GM12878 (cell line): ENCODE measurements at regions of chr17 and their contacts with region 1.

Region 1: GRCh38 chr17:78019367-78019975 is 61.0 kb downstream of the TNRC6C start:
- DNase-seq: peak; percentile 9
- ATAC-seq: peak; percentile 63
- H3K4me3 ChIP-seq: peak overlapping the region; percentile 25; the same call in 1 of the 2 replicates
- H3K27ac ChIP-seq: peak overlapping the region; percentile 60; the same call in 1 of the 2 replicates
- H3K4me1 ChIP-seq: peaks cover 14% of the 10 kb centered on the region
- H3K27me3 ChIP-seq: no peaks in the 10 kb centered on the region
- CTCF ChIP-seq: peak; percentile 31 to 67 (median 51); a peak in 5 of 6 replicates
- EP300 ChIP-seq: no peak
- POLR2A ChIP-seq: no peak
- RAD21 ChIP-seq: peak; percentile 62

Region 2: DNA sequence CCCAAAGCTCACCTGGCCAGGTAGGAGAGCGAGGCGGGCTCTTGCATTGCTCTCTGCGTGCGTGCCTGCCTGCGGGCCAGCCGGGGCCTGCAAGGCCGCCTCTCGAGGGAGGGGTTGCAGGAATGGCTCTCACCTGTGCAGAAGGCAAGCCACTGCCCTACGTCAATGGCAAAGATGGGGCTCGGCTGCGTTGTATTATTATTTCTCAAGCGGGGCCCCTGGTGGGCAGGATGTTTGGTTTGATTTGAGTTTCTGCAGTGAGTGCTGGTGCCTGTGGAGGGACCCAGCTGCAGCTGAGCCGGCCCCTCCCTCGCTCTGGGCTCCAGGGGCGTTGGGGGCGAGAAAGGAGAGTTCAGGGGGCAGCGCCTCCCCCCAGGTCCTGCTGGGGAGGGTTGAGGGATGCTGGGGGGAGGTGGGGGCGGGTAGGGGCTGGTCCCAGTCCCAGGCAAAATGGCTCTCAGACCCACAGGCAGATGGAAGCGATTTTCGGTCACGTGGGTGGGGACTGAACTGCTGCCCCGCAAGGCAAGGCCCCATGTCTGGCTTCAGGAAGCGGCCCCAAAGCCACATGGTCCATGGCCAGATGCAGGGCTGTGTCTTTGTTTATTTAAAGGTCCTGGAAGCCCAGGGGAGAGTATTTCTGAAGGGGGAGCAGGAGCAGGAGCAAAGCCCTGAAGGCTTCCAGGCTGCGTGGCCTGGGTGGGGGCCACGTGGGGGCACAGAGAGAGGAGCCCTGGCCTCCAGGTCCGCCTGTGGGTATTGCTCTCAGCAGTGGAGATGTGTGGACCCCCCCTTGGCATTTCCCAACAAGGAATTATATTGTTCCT is 539.9 kb before region 1 on chr17:
- CTCF ChIA-PET with region 1: no interaction called
- POLR2A ChIA-PET with region 1: no interaction called
- RAD21 ChIA-PET with region 1: no interaction called
- SMC1A ChIA-PET with region 1: no interaction called
- in situ Hi-C with region 1: no loop called
- intact Hi-C with region 1: no loop called
- DNase-seq: no peak
- ATAC-seq: no peak
- H3K4me3 ChIP-seq: no peak overlapping the region
- H3K27ac ChIP-seq: no peak overlapping the region
- H3K4me1 ChIP-seq: peaks cover 19% of the 10 kb centered on the region
- H3K27me3 ChIP-seq: no peaks in the 10 kb centered on the region
- CTCF ChIP-seq: no peak
- EP300 ChIP-seq: no peak
- POLR2A ChIP-seq: no peak; the same call in 1 of the 2 replicates
- RAD21 ChIP-seq: no peak

Region 3: GRCh38 chr17:77542551-77543490 is 476.6 kb before region 1 on chr17:
- CTCF ChIA-PET with region 1: interaction called, 58 read pairs
- POLR2A ChIA-PET with region 1: no interaction called
- RAD21 ChIA-PET with region 1: interaction called, 41 read pairs
- SMC1A ChIA-PET with region 1: interaction called, 26 read pairs
- in situ Hi-C with region 1: loop called (anchors 5 kb)
- intact Hi-C with region 1: loop called (anchors 1 kb)
- DNase-seq: peak; percentile 5
- ATAC-seq: peak; percentile 91
- H3K4me3 ChIP-seq: no peak overlapping the region
- H3K27ac ChIP-seq: no peak overlapping the region
- H3K4me1 ChIP-seq: no peaks in the 10 kb centered on the region
- H3K27me3 ChIP-seq: peaks cover 0 to 1% of the 10 kb centered on the region in 2 experiments; a peak in 2 of 4 replicates
- CTCF ChIP-seq: peak; percentile 84 to 88 (median 86)
- EP300 ChIP-seq: no peak
- POLR2A ChIP-seq: no peak
- RAD21 ChIP-seq: peak; percentile 84

Region 4: DNA sequence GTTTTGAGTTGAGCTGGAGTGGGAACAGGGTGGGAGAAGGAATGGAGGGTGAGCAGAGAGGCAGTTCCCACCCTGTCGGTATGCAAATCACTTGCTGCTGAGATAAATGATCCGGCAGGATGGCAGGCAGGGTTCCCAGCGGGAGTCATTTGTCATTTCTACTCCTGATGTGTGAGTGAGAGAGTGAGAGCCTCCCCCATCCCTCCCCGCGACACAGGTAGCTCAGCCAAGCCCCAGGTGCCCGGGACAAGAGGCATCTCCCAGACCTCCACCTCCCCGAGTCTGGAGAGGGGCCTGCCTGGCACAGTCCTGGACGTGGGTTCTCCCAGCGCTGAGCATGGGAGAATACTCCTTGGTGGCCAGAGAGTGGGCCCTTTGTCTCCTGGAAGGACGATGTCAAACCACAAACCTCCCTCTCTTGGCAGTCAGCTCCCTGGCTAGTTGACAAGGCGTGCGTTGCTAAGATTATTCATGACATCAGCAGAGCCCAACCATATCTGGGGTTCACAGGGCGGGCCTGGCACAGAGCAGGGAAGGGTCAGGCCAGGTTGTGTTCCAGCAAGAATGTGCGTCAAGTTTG is 94.6 kb before region 1 on chr17:
- CTCF ChIA-PET with region 1: no interaction called
- POLR2A ChIA-PET with region 1: no interaction called
- RAD21 ChIA-PET with region 1: no interaction called
- SMC1A ChIA-PET with region 1: no interaction called
- in situ Hi-C with region 1: no loop called
- intact Hi-C with region 1: no loop called
- DNase-seq: no peak
- ATAC-seq: no peak
- H3K4me3 ChIP-seq: no peak overlapping the region
- H3K27ac ChIP-seq: no peak overlapping the region
- H3K4me1 ChIP-seq: no peaks in the 10 kb centered on the region
- H3K27me3 ChIP-seq: peaks cover 0 to 3% of the 10 kb centered on the region in 2 experiments; a peak in 2 of 4 replicates
- CTCF ChIP-seq: no peak
- EP300 ChIP-seq: no peak
- POLR2A ChIP-seq: no peak
- RAD21 ChIP-seq: no peak

Region 5: GRCh38 chr17:77957857-77958715 is 61.4 kb before region 1 on chr17 and contains the start of gene TNRC6C:
- CTCF ChIA-PET with region 1: interaction called, 9 read pairs
- POLR2A ChIA-PET with region 1: interaction called, 10 read pairs
- RAD21 ChIA-PET with region 1: interaction called, 24 read pairs
- SMC1A ChIA-PET with region 1: interaction called, 6 read pairs
- in situ Hi-C with region 1: no loop called
- intact Hi-C with region 1: no loop called
- DNase-seq: peak; percentile 87
- ATAC-seq: peak; percentile 96
- H3K4me3 ChIP-seq: peak within 1 kb of the TSS; percentile 75
- H3K27ac ChIP-seq: no peak within 1 kb of the TSS
- H3K4me1 ChIP-seq: peaks cover 16% of the 10 kb centered on the region
- H3K27me3 ChIP-seq: peaks cover 0 to 3% of the 10 kb centered on the region in 2 experiments; a peak in 2 of 4 replicates
- CTCF ChIP-seq: peak in 2 of 3 experiments; percentile 20 to 38; a peak in 3 of 6 replicates
- EP300 ChIP-seq: no peak; a peak in 2 of 4 replicates
- POLR2A ChIP-seq: peak; percentile 100
- RAD21 ChIP-seq: no peak
- polyA plus RNA-seq, gene TNRC6C: 0.40 to 0.43 TPM

Region 6: DNA sequence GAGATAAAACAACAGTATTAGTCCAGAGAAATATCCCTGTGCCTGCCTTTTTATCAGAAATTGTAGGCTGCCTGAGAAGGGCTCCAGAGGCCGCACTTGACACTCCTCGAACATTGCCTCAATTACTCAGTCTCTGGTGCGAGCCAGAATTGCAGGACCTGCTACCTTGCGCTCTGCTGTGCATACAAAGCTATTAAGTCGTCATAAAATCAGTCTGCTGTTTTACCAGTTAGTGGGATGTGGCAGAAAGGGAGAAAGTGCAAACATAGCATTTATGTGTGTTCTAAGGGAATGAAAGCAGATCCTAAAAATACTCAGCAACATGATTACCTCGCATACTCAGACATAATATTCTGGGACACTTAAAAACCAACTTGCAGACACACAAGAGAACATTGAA is 38.5 kb after region 1 on chr17:
- CTCF ChIA-PET with region 1: interaction called, 20 read pairs
- POLR2A ChIA-PET with region 1: no interaction called
- RAD21 ChIA-PET with region 1: interaction called, 5 read pairs
- SMC1A ChIA-PET with region 1: interaction called, 14 read pairs
- in situ Hi-C with region 1: no loop called
- intact Hi-C with region 1: no loop called
- DNase-seq: no peak
- ATAC-seq: no peak
- H3K4me3 ChIP-seq: no peak overlapping the region
- H3K27ac ChIP-seq: no peak overlapping the region
- H3K4me1 ChIP-seq: no peaks in the 10 kb centered on the region
- H3K27me3 ChIP-seq: no peaks in the 10 kb centered on the region
- CTCF ChIP-seq: no peak
- EP300 ChIP-seq: no peak
- POLR2A ChIP-seq: no peak
- RAD21 ChIP-seq: no peak

Region 7: GRCh38 chr17:78089576-78090281 is 70.3 kb after region 1 on chr17:
- CTCF ChIA-PET with region 1: interaction called, 100 read pairs
- POLR2A ChIA-PET with region 1: interaction called, 4 read pairs
- RAD21 ChIA-PET with region 1: interaction called, 79 read pairs
- SMC1A ChIA-PET with region 1: interaction called, 94 read pairs
- in situ Hi-C with region 1: no loop called
- intact Hi-C with region 1: loop called (anchors 5 kb)
- DNase-seq: no peak
- ATAC-seq: no peak
- H3K4me3 ChIP-seq: no peak overlapping the region
- H3K27ac ChIP-seq: no peak overlapping the region
- H3K4me1 ChIP-seq: no peaks in the 10 kb centered on the region
- H3K27me3 ChIP-seq: no peaks in the 10 kb centered on the region
- CTCF ChIP-seq: no peak
- EP300 ChIP-seq: no peak
- POLR2A ChIP-seq: no peak
- RAD21 ChIP-seq: no peak

Region 8: DNA sequence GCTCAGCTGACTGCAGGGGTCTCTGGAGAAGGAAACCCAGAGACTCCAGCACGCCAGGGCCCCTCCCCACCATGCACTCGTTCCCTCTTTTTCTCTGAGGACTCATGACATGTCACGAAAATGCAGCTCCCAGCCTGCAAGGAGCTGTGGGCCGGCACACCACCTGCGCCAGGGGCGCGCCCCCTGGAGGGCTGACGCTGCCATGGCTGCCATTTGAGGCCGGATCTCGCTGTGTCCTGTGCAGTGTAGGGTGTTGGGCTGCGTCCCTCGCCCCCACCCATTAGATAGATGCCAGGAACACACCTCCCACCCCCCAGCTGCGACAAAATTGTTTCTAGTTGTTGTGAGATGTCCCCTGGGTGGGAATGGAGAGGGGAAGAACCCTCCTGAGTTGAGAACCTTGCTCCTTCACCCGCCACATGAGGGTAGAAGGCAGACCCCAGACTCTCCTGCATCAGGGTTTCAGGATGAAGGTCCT is 157.1 kb after region 1 on chr17:
- CTCF ChIA-PET with region 1: interaction called, 28 read pairs
- POLR2A ChIA-PET with region 1: no interaction called
- RAD21 ChIA-PET with region 1: interaction called, 4 read pairs
- SMC1A ChIA-PET with region 1: interaction called, 14 read pairs
- in situ Hi-C with region 1: no loop called
- intact Hi-C with region 1: no loop called
- DNase-seq: no peak
- ATAC-seq: peak; percentile 68
- H3K4me3 ChIP-seq: no peak overlapping the region
- H3K27ac ChIP-seq: no peak overlapping the region
- H3K4me1 ChIP-seq: peaks cover 59% of the 10 kb centered on the region
- H3K27me3 ChIP-seq: no peaks in the 10 kb centered on the region
- CTCF ChIP-seq: peak; percentile 94 to 99 (median 99); a peak in 5 of 6 replicates
- EP300 ChIP-seq: no peak
- POLR2A ChIP-seq: peak; percentile 75
- RAD21 ChIP-seq: peak; percentile 82

Region 9: DNA sequence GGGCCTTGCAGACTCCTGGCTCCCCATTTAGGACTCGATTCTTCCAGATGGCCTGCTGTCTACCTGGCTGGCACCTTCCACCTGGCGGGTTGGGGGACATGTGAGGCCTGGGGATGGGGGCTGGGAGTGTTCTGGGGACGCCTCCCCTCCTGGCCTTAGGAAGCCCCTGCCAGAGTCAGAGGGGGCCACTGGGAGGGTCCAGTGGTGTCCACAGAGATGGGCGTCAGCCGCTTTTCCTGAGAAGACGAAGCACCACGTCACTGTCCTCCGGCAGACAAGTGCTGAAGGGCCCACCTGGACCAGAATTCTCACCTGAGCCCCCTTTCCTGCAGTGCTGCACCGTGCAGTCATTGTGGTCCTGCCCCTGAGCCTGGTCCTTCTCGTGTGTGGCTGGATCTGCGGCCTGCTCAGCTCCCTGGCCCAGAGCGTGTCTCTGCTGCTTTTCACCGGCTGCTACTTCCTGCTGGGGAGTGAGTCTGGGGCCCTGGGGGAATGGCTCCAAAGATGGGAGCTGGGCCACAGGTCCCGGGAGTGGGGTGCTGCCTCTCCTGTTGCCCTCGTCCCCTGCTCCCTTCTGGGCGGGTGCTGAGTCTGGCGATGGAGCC is 214.9 kb after region 1 on chr17:
- CTCF ChIA-PET with region 1: no interaction called
- POLR2A ChIA-PET with region 1: no interaction called
- RAD21 ChIA-PET with region 1: no interaction called
- SMC1A ChIA-PET with region 1: no interaction called
- in situ Hi-C with region 1: no loop called
- intact Hi-C with region 1: no loop called
- DNase-seq: no peak
- ATAC-seq: no peak
- H3K4me3 ChIP-seq: no peak overlapping the region
- H3K27ac ChIP-seq: no peak overlapping the region
- H3K4me1 ChIP-seq: peaks cover 2% of the 10 kb centered on the region; the same call in 1 of the 2 replicates
- H3K27me3 ChIP-seq: peaks cover 6 to 9% of the 10 kb centered on the region in 2 experiments; a peak in 3 of 4 replicates
- CTCF ChIP-seq: no peak
- EP300 ChIP-seq: no peak
- POLR2A ChIP-seq: no peak
- RAD21 ChIP-seq: no peak

Region 10: GRCh38 chr17:78421484-78422266 is 402.2 kb after region 1 on chr17:
- CTCF ChIA-PET with region 1: interaction called, 10 read pairs
- POLR2A ChIA-PET with region 1: no interaction called
- RAD21 ChIA-PET with region 1: interaction called, 3 read pairs
- SMC1A ChIA-PET with region 1: no interaction called
- in situ Hi-C with region 1: no loop called
- intact Hi-C with region 1: no loop called
- DNase-seq: peak; percentile 7
- ATAC-seq: peak; percentile 96
- H3K4me3 ChIP-seq: no peak overlapping the region
- H3K27ac ChIP-seq: no peak overlapping the region
- H3K4me1 ChIP-seq: no peaks in the 10 kb centered on the region; the same call in 1 of the 2 replicates
- H3K27me3 ChIP-seq: no peaks in the 10 kb centered on the region
- CTCF ChIP-seq: peak; percentile 95 to 99 (median 99); a peak in 5 of 6 replicates
- EP300 ChIP-seq: no peak
- POLR2A ChIP-seq: no peak
- RAD21 ChIP-seq: peak; percentile 92